Astrocyte of the cerebellum (primary cell): ENCODE measurements at regions of chr2 and their contacts with region 1.

Region 1: GRCh38 chr2:172172513-172173173 is 69.9 kb upstream of the DLX2 start:
- DNase-seq: no peak
- H3K4me3 ChIP-seq: peak overlapping the region; percentile 56
- CTCF ChIP-seq: peak; percentile 83

Region 2: GRCh38 chr2:172208791-172209325 is 36.2 kb after region 1 on chr2:
- in situ Hi-C with region 1: no loop called
- DNase-seq: no peak
- H3K4me3 ChIP-seq: no peak overlapping the region
- CTCF ChIP-seq: no peak

Region 3: GRCh38 chr2:172472446-172473033 is 299.9 kb after region 1 on chr2:
- in situ Hi-C with region 1: loop called (anchors 5 kb)
- DNase-seq: no peak
- H3K4me3 ChIP-seq: no peak overlapping the region
- CTCF ChIP-seq: no peak